ENCODE measurements at regions of chr11 and their contacts with region 1.

Region 1: GRCh38 chr11:69510471-69511357 is 29.3 kb downstream of the LINC01488 start:
- DNase-seq: peak; percentile 72
- ATAC-seq: peak; percentile 98
- H3K4me3 ChIP-seq: no peak overlapping the region
- H3K27ac ChIP-seq: no peak overlapping the region
- H3K4me1 ChIP-seq: peaks cover 8% of the 10 kb centered on the region
- H3K27me3 ChIP-seq: no peaks in the 10 kb centered on the region
- CTCF ChIP-seq: no peak
- POLR2A ChIP-seq: no peak
- RAD21 ChIP-seq: no peak

Region 2: GRCh38 chr11:69327741-69328191 is 182.9 kb before region 1 on chr11:
- CTCF ChIA-PET with region 1: no interaction called
- POLR2A ChIA-PET with region 1: no interaction called
- dilution Hi-C with region 1: no loop called
- in situ Hi-C with region 1: no loop called
- intact Hi-C with region 1: no loop called
- DNase-seq: no peak
- ATAC-seq: no peak
- H3K4me3 ChIP-seq: no peak overlapping the region
- H3K27ac ChIP-seq: no peak overlapping the region
- H3K4me1 ChIP-seq: no peaks in the 10 kb centered on the region
- H3K27me3 ChIP-seq: no peaks in the 10 kb centered on the region
- CTCF ChIP-seq: no peak
- POLR2A ChIP-seq: no peak
- RAD21 ChIP-seq: no peak

Region 3: DNA sequence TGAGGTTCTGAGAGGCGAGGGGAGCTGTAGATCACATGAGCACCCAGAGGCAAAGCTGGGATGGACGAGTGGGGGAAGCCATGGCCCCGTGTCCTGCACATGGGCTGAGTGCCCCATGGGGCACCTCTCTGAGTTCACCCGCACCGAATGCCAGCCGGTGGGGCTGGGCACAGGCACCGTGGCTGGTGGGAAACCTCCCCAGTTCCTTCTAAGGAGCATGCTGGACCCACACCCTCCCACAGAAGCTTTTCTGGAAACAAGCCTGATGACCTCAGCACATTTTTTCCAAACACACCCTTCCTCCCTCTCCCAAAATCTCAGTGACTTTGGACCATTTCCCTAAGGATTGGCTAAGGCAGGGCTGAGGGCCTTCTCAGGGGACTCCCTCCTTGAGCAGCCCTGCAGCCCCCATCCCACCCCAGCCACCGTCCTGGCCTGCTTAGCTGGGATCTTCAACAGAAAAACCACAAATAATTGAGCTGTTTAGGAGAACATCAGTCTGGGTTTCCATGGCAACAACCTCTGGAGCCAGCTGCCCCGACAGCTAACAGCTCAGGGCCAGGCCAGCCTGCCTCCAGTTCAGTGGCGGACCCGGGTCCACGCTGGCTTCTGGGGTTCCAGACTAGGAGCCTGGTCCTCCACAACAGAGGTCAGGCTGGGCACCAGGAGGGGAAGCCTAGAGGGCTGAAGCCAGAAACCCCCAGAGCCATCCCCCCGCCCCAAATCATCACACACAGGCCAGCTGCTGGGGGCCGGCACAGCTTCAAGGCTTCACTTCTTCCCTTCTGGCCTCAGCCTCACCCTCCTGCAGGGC is 47.3 kb before region 1 on chr11:
- CTCF ChIA-PET with region 1: no interaction called
- POLR2A ChIA-PET with region 1: no interaction called
- dilution Hi-C with region 1: no loop called
- in situ Hi-C with region 1: no loop called
- intact Hi-C with region 1: loop called (anchors 1 kb)
- DNase-seq: peak; percentile 80
- ATAC-seq: peak; percentile 84
- H3K4me3 ChIP-seq: no peak overlapping the region
- H3K27ac ChIP-seq: no peak overlapping the region
- H3K4me1 ChIP-seq: peaks cover 12% of the 10 kb centered on the region
- H3K27me3 ChIP-seq: no peaks in the 10 kb centered on the region
- CTCF ChIP-seq: no peak
- POLR2A ChIP-seq: no peak
- RAD21 ChIP-seq: no peak

Region 4: DNA sequence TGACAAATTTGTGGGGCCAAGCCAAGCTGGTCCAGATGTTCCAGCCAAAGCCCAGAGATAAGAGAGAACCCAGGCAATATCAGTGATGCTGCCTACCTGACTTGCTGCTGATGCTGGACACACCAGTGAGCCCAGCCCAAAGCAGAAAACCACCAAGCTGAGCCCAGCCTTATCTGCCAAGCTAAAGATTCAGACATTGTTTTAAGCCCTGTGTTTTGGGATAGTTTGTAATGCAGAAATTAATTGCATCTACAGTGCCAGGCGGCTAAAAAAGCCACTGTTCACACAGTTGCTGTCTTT is 37.2 kb before region 1 on chr11:
- CTCF ChIA-PET with region 1: no interaction called
- POLR2A ChIA-PET with region 1: no interaction called
- dilution Hi-C with region 1: no loop called
- in situ Hi-C with region 1: no loop called
- intact Hi-C with region 1: no loop called
- DNase-seq: no peak
- ATAC-seq: no peak
- H3K4me3 ChIP-seq: no peak overlapping the region
- H3K27ac ChIP-seq: no peak overlapping the region
- H3K4me1 ChIP-seq: no peaks in the 10 kb centered on the region
- H3K27me3 ChIP-seq: 0 out of 2 replicates have a peak, but pooled peaks cover 1% of the 10 kb centered on the region
- CTCF ChIP-seq: no peak
- POLR2A ChIP-seq: no peak
- RAD21 ChIP-seq: no peak

Region 5: DNA sequence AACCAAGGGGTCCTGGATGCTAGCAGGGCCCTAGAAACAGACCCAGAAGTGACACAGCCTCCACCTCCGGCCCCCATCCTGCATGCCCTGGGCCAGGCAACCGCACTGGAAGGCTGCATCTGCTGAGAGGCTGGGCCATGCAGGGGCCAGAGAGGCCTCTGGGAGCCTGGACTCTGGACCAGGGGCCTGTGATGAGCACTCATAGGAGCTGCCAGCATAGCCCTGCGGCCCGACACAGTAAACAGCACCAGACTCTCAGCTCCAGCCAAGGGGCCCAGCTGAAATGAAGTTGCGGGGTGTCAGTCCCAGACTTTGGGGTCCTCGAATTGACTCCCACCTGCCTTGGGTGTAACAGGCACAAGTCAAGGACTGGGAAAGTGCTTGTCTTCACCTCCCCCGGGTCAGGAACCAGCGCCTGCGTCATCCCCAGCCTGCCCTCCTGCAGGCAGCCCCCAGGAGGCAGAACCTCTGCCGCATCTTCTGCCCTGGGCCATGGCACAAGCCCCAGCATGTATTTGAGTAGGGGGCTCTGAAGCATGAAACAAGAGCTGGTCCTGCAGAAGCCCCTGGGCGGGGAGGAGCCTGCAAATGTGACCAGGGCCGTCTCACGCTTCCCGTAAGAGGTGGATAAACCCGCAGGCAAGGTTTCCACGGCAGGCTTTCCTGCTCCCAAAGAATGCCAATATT is 105.0 kb after region 1 on chr11:
- CTCF ChIA-PET with region 1: no interaction called
- POLR2A ChIA-PET with region 1: no interaction called
- dilution Hi-C with region 1: no loop called
- in situ Hi-C with region 1: no loop called
- intact Hi-C with region 1: no loop called
- DNase-seq: no peak
- ATAC-seq: no peak
- H3K4me3 ChIP-seq: no peak overlapping the region
- H3K27ac ChIP-seq: no peak overlapping the region
- H3K4me1 ChIP-seq: no peaks in the 10 kb centered on the region; the same call in 1 of the 2 replicates
- H3K27me3 ChIP-seq: no peaks in the 10 kb centered on the region; the same call in 1 of the 2 replicates
- CTCF ChIP-seq: no peak
- POLR2A ChIP-seq: no peak
- RAD21 ChIP-seq: no peak

Region 6: GRCh38 chr11:69654569-69655327 is 144.0 kb after region 1 on chr11:
- CTCF ChIA-PET with region 1: no interaction called
- POLR2A ChIA-PET with region 1: no interaction called
- dilution Hi-C with region 1: no loop called
- in situ Hi-C with region 1: no loop called
- intact Hi-C with region 1: no loop called
- DNase-seq: peak; percentile 52
- ATAC-seq: peak; percentile 29
- H3K4me3 ChIP-seq: no peak overlapping the region
- H3K27ac ChIP-seq: no peak overlapping the region
- H3K4me1 ChIP-seq: peaks cover 11% of the 10 kb centered on the region; the same call in 1 of the 2 replicates
- H3K27me3 ChIP-seq: no peaks in the 10 kb centered on the region
- CTCF ChIP-seq: no peak
- POLR2A ChIP-seq: no peak; the same call in 1 of the 2 replicates
- RAD21 ChIP-seq: no peak